Common myeloid progenitor, CD34-positive (primary cell): ENCODE measurements at regions of chr10 and their contacts with region 1.

Region 1: GRCh38 chr10:92573798-92574547 is at the start of gene IDE:
- DNase-seq: peak; percentile 87 to 93 (median 92)
- H3K4me3 ChIP-seq: peak within 1 kb of the TSS; percentile 68 to 93 (median 92)
- H3K27ac ChIP-seq: peak within 1 kb of the TSS; percentile 82 to 89
- H3K4me1 ChIP-seq: peaks cover 7 to 28% (median 20%) of the 10 kb centered on the region in 4 experiments
- H3K27me3 ChIP-seq: no peaks in the 10 kb centered on the region

Region 2: GRCh38 chr10:92517034-92517655 is 56.8 kb before region 1 on chr10:
- CTCF ChIA-PET with region 1: interaction called, 68 read pairs
- POLR2A ChIA-PET with region 1: no interaction called
- DNase-seq: peak; percentile 85 to 92 (median 88)
- H3K4me3 ChIP-seq: no peak overlapping the region
- H3K27ac ChIP-seq: no peak overlapping the region
- H3K4me1 ChIP-seq: no peaks in the 10 kb centered on the region
- H3K27me3 ChIP-seq: no peaks in the 10 kb centered on the region

Region 3: DNA sequence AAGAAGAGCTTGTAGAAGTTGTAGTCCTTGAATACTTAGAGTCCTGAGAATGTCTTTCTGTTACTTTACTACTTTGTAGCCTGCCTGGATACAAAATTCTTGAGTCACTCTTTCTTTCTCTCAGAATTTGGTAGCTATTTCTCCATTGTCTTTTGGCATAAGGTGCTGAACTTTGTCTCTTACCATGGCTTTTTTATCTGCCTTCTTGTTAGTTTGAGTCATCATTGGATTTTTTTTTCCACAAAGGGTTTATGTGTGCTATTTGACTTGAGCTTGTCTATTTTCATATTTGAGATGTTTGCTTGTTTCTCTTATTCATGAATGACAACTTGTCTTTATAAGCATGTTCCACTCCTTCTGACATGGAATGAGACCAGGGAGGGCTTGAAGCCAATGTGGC is 199.8 kb after region 1 on chr10:
- CTCF ChIA-PET with region 1: no interaction called
- POLR2A ChIA-PET with region 1: no interaction called
- DNase-seq: no peak
- H3K4me3 ChIP-seq: no peak overlapping the region
- H3K27ac ChIP-seq: no peak overlapping the region
- H3K4me1 ChIP-seq: peaks cover 0 to 2% (median 0%) of the 10 kb centered on the region in 4 experiments
- H3K27me3 ChIP-seq: no peaks in the 10 kb centered on the region